ENCODE measurements at regions of chr1 and their contacts with region 1.

Region 1: DNA sequence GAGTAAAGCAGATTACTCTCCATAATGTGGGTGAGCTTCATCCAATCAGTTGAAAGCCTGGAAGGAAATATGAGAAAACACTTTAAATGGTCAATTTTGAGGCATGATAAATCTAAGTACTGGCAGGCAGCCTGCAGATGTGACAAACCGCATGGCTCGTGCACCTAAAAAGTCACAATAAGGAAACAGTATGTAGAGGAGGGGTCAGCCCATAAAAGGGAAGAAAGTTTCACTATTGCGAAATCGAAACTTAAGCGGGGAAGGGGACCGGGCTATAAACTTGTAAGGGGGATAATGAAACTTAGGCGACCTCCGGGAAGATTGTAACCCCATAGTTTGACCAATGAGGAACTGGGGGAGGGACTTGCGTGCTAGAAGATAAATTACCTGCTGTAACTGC is 109.8 kb downstream of the PLPPR4 start:
- DNase-seq: no peak
- H3K4me3 ChIP-seq: no peak overlapping the region
- H3K27ac ChIP-seq: no peak overlapping the region
- H3K4me1 ChIP-seq: no peaks in the 10 kb centered on the region
- H3K27me3 ChIP-seq: no peaks in the 10 kb centered on the region
- CTCF ChIP-seq: no peak
- POLR2A ChIP-seq: no peak

Region 2: DNA sequence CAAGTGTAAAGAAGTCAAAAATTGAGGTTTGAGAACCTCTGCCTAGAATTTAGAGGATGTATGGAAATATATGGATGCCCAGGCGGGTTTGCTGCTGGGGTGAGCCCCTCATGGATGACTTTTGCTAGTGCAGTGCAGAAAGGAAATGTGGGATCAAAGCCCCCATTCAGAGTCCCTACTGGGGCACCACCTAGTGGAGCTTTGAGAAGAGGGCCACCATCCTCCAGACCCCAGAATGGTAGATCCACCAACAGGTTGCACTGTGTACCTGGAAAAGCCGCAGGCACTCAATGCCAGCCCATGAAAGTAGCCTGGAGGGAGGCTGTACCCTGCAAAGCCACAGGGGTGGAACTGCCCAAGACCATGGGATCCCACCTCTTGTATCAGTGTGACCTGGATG is 1122.6 kb before region 1 on chr1:
- CTCF ChIA-PET with region 1: no interaction called
- POLR2A ChIA-PET with region 1: no interaction called
- dilution Hi-C with region 1: no loop called
- intact Hi-C with region 1: loop called (anchors 10 kb)
- DNase-seq: no peak
- H3K4me3 ChIP-seq: no peak overlapping the region
- H3K27ac ChIP-seq: no peak overlapping the region
- H3K4me1 ChIP-seq: no peaks in the 10 kb centered on the region
- H3K27me3 ChIP-seq: no peaks in the 10 kb centered on the region
- CTCF ChIP-seq: no peak
- POLR2A ChIP-seq: no peak

Region 3: DNA sequence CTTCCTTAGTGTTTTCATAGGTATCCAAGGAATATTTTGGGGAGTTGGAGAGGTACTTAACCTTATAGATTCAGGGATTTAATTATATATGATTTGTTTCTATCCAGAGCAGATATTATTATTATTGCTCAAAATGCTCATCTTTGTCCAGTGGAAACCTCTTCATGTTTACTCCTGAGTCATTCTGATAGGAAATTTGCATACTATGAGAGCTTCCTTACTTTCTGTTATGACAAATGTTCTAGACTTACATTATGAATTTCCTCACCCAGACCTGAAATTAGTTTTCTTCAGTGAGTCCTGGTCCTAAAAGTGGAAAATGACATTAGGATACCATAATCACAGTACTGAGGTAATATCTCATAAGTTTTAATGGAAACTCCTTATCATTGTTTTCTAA is 311.9 kb before region 1 on chr1:
- CTCF ChIA-PET with region 1: no interaction called
- POLR2A ChIA-PET with region 1: no interaction called
- dilution Hi-C with region 1: no loop called
- intact Hi-C with region 1: no loop called
- DNase-seq: no peak
- H3K4me3 ChIP-seq: no peak overlapping the region
- H3K27ac ChIP-seq: no peak overlapping the region
- H3K4me1 ChIP-seq: no peaks in the 10 kb centered on the region
- H3K27me3 ChIP-seq: peaks cover 2 to 3% of the 10 kb centered on the region in 2 experiments
- CTCF ChIP-seq: no peak
- POLR2A ChIP-seq: no peak

Region 4: DNA sequence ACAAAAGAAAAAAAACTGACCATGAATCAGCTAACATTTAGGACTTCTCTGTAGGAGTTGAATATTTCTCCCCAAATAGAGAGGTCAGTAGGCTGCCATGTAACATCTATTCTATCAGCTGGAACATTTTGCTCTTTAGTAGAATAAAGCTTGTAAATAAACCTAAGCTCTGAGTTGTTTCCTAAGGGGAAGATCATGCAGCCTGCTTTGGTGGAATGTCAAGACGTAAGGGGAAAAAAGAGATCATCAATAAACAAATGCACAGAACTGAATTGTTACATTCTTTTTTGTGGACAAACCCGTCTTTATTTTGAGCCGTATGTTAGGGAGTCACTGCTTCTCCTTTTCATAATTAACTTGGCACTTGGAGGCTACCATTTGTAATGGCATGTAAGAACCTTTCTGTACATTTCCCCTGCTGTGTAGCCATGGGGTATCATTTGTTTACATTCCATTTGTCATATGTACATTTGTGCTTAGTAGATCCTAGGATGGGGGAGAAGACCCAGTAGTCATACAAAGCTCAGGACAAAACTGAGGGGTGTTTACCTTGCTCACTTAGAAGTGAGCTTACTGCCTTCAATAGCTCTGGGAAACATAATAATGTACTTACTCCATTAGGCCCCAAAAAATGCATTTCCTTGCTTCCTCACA is 261.0 kb after region 1 on chr1:
- CTCF ChIA-PET with region 1: no interaction called
- POLR2A ChIA-PET with region 1: no interaction called
- dilution Hi-C with region 1: no loop called
- intact Hi-C with region 1: no loop called
- DNase-seq: no peak
- H3K4me3 ChIP-seq: no peak overlapping the region
- H3K27ac ChIP-seq: no peak overlapping the region
- H3K4me1 ChIP-seq: peaks cover 25% of the 10 kb centered on the region
- H3K27me3 ChIP-seq: no peaks in the 10 kb centered on the region
- CTCF ChIP-seq: no peak
- POLR2A ChIP-seq: no peak

Measured in endothelial cell of umbilical vein (primary cell).